Common myeloid progenitor, CD34-positive (primary cell): ENCODE measurements at regions of chr2 and their contacts with region 1.

Region 1: GRCh38 chr2:64562148-64562784 is 38.1 kb downstream of the AFTPH start:
- DNase-seq: peak; percentile 48 to 74 (median 71)
- H3K4me3 ChIP-seq: no peak overlapping the region
- H3K27ac ChIP-seq: no peak overlapping the region
- H3K4me1 ChIP-seq: peaks cover 6 to 24% (median 12%) of the 10 kb centered on the region in 4 experiments
- H3K27me3 ChIP-seq: no peaks in the 10 kb centered on the region

Region 2: GRCh38 chr2:64453770-64454385 is 108.4 kb before region 1 on chr2 and contains the start of gene LGALSL:
- CTCF ChIA-PET with region 1: interaction called, 24 read pairs
- POLR2A ChIA-PET with region 1: no interaction called
- DNase-seq: peak; percentile 46 to 76 (median 66)
- H3K4me3 ChIP-seq: peak within 1 kb of the TSS; percentile 60 to 80 (median 73)
- H3K27ac ChIP-seq: no peak within 1 kb of the TSS
- H3K4me1 ChIP-seq: peaks cover 0 to 21% (median 13%) of the 10 kb centered on the region in 4 experiments
- H3K27me3 ChIP-seq: peaks cover 0 to 7% (median 0%) of the 10 kb centered on the region in 5 experiments

Region 3: DNA sequence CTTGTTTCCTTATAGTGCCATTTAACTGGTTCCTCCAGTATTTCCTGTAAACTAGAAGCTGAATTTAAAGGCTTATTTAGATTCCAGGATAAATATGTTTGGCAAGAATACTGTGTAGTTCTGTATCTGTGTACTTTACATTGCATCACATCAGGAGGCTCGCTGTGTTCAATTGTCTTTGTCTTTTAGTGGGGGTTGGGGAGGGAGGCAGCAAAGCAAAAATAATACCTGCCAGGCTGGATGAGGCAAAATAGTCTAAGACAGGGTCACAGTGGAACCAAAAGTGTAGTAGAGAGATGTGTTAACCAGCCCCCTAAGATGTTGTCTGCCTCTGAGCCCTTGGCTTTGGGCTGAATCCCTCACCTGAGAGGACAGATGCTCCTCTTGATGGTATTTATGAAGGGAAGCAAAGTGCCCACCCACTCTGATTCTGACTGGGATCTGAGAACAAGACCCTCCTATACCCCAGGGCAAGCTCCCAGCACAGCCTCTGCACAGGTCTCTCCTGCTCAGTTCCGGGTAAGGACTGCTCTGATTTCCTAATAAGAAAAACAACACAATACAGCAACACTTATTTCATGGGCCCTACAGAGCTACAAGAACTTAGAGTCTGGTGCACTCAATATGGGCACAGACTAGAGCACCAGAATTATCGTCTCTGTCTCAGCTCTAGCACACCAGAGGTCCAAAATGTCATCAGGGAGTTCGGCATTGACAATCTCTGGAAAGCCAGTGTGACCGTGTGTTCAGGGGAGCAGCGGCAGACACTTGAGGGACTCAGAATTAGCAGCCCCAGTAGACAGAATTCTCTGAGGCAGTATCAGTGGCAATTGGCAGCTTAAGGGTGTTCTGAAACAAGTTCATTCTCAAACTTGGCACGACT is 45.4 kb before region 1 on chr2:
- CTCF ChIA-PET with region 1: interaction called, 56 read pairs
- POLR2A ChIA-PET with region 1: no interaction called
- DNase-seq: no peak
- H3K4me3 ChIP-seq: no peak overlapping the region
- H3K27ac ChIP-seq: no peak overlapping the region
- H3K4me1 ChIP-seq: no peaks in the 10 kb centered on the region
- H3K27me3 ChIP-seq: peaks cover 0 to 3% (median 0%) of the 10 kb centered on the region in 5 experiments

Region 4: DNA sequence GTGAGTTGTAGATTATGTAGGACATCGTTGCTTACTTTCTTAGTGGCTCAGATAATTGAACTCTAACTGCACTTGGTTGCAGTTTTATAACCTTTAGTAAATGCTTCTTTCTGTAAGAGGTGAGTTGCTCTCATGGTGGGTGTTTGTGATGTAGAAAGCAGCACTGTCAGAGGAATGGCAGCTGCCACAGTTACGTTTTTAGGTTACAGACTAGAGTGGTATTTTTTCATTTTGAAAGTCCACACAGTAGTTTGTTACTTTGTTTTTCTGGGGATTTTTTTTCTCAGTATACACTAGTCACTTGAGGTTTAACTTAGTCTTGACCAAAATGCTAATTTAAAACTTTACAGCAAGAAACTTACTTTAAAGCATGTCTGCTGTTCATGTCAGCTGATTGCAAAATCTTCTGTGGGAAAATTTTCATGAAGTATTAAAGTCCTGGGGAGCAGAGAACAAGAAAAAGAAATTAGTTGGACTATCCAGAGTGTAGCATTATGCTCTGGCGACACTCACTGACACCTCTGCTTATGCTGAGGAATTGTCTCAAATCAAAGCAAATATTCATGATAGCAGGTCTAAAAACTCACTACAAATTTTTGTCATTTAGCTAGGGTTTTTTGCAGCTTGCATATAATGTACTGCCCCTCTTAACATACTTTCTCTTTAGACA is 23.4 kb before region 1 on chr2:
- CTCF ChIA-PET with region 1: interaction called, 19 read pairs
- POLR2A ChIA-PET with region 1: no interaction called
- DNase-seq: no peak
- H3K4me3 ChIP-seq: no peak overlapping the region
- H3K27ac ChIP-seq: no peak overlapping the region
- H3K4me1 ChIP-seq: peaks cover 0 to 8% (median 2%) of the 10 kb centered on the region in 4 experiments
- H3K27me3 ChIP-seq: no peaks in the 10 kb centered on the region